ENCODE measurements at regions of chr15 and their contacts with region 1.

Region 1: GRCh38 chr15:32657198-32657883 is 15.8 kb downstream of the SCG5 start:
- DNase-seq: peak in 1 of 3 donors; percentile 31
- ATAC-seq: peak; percentile 91
- H3K4me3 ChIP-seq: no peak overlapping the region
- H3K4me1 ChIP-seq: no peaks in the 10 kb centered on the region
- CTCF ChIP-seq: no peak

Region 2: DNA sequence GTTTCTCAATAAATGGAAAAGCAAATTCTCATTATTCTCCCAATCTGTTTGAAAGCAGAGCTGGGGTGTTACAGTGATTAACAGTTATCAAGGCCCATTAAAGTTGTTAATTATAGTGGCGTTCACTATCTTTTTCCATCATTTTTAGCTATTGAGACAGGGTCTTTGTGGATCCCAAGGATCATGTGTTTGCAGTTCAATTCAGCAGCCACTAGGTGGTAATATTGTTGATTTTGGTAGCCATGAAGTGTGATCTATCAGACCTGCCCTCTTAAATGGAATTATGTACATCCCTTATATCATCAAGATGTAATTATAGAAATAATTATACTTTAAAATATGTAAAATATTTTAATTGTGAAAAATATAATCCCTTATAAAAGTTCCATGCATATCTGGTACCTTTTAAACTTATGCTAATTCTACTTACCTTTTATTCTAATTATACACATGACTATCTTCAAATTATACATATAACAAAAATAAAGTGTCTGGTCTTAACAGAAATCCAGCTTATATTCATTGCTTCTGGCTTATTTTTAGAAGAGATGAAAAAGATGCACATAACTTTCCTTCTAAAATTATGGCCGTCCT is 186.9 kb after region 1 on chr15:
- intact Hi-C with region 1: loop called in 1 of 2 experiments (anchors 5 kb)
- DNase-seq: no peak
- ATAC-seq: no peak
- H3K4me3 ChIP-seq: no peak overlapping the region
- H3K4me1 ChIP-seq: no peaks in the 10 kb centered on the region
- CTCF ChIP-seq: no peak

Region 3: DNA sequence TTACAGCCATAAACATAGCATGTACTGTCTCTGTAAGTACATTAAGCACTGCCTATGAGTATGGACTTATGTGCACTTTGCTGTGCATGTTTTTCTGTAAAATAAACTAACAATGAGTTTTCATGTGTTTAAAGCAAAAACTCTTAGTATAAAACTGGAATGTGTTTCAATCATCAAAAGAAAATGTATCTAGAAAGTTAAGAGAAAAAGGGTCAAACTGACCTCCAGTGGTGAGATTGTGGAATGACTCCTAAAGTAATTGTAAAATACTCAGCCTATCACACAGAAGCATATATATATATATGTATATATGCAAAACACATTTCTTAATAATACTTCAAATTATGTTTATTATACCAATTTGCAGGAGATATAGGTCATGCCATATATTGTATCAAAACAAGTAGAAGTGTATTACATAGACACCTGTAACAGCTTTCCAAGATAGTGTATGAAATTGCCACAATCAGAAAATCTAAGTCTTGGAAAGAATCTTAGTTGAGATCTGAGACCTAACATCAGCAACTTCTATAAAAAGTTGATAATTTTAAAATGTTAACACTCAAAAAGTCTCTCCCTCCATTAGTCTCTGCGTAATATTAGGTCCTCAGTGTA is 337.6 kb after region 1 on chr15:
- intact Hi-C with region 1: loop called (anchors 5 kb)
- DNase-seq: no peak
- ATAC-seq: no peak
- H3K4me3 ChIP-seq: no peak overlapping the region
- H3K4me1 ChIP-seq: no peaks in the 10 kb centered on the region
- CTCF ChIP-seq: no peak

Measured in mucosa of descending colon (tissue), 3 donors.